ENCODE measurements at regions of chr5 and their contacts with region 1.

Region 1: GRCh38 chr5:157948738-157949410 is 89.9 kb upstream of the CLINT1 start:
- DNase-seq: peak; percentile 90
- ATAC-seq: peak; percentile 100
- H3K4me3 ChIP-seq: no peak overlapping the region
- H3K27ac ChIP-seq: no peak overlapping the region
- H3K4me1 ChIP-seq: no peaks in the 10 kb centered on the region
- H3K27me3 ChIP-seq: no peaks in the 10 kb centered on the region
- CTCF ChIP-seq: peak; percentile 93
- POLR2A ChIP-seq: no peak
- RAD21 ChIP-seq: peak; percentile 63

Region 2: DNA sequence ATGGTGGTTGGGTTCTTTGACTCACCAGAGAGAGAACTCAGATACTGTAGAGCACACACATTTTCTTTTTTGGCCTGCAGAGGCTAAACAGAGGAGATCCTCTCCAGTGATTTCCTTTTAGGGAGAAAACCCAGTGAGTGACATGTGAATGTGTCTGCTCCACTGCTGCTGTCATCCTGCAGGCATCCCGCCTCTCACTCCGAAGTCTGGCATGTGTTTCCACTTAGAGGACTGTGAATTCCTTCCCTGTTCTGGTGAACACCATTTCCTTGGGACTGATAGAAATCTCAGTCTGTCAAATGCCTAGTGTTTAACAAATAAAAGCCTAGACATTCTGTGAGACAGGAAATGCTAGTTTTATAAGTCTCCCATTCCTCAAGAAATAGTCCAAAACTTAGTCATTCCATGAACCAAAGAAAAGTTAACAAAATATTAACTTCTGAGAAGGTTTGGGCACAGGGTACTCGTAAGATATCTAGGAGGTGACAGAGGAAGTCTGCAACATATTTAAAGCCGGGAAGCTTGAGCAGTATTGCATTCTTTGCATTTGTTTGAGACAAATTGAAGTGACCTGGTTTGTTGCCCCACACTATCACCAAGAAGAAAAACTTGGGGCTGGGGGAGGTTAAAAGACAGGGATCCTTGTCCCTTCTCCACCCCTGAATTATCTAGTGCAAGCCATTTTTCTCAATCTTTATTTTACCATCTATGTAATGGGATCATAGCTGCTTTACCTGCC is 563.7 kb before region 1 on chr5:
- CTCF ChIA-PET with region 1: no interaction called
- POLR2A ChIA-PET with region 1: no interaction called
- dilution Hi-C with region 1: no loop called
- in situ Hi-C with region 1: no loop called
- intact Hi-C with region 1: no loop called
- DNase-seq: peak; percentile 99
- ATAC-seq: peak; percentile 86
- H3K4me3 ChIP-seq: no peak overlapping the region
- H3K27ac ChIP-seq: peak overlapping the region; percentile 64
- H3K4me1 ChIP-seq: peaks cover 23% of the 10 kb centered on the region
- H3K27me3 ChIP-seq: no peaks in the 10 kb centered on the region
- CTCF ChIP-seq: no peak
- POLR2A ChIP-seq: no peak
- RAD21 ChIP-seq: no peak

Region 3: GRCh38 chr5:158382473-158382872 is 433.6 kb after region 1 on chr5:
- CTCF ChIA-PET with region 1: no interaction called
- POLR2A ChIA-PET with region 1: no interaction called
- dilution Hi-C with region 1: no loop called
- in situ Hi-C with region 1: no loop called
- intact Hi-C with region 1: loop called (anchors 10 kb)
- DNase-seq: peak; percentile 97
- ATAC-seq: peak; percentile 91
- H3K4me3 ChIP-seq: no peak overlapping the region
- H3K27ac ChIP-seq: no peak overlapping the region
- H3K4me1 ChIP-seq: peaks cover 8% of the 10 kb centered on the region
- H3K27me3 ChIP-seq: no peaks in the 10 kb centered on the region
- CTCF ChIP-seq: no peak
- POLR2A ChIP-seq: no peak
- RAD21 ChIP-seq: peak; percentile 2; the same call in 1 of the 2 replicates

Region 4: DNA sequence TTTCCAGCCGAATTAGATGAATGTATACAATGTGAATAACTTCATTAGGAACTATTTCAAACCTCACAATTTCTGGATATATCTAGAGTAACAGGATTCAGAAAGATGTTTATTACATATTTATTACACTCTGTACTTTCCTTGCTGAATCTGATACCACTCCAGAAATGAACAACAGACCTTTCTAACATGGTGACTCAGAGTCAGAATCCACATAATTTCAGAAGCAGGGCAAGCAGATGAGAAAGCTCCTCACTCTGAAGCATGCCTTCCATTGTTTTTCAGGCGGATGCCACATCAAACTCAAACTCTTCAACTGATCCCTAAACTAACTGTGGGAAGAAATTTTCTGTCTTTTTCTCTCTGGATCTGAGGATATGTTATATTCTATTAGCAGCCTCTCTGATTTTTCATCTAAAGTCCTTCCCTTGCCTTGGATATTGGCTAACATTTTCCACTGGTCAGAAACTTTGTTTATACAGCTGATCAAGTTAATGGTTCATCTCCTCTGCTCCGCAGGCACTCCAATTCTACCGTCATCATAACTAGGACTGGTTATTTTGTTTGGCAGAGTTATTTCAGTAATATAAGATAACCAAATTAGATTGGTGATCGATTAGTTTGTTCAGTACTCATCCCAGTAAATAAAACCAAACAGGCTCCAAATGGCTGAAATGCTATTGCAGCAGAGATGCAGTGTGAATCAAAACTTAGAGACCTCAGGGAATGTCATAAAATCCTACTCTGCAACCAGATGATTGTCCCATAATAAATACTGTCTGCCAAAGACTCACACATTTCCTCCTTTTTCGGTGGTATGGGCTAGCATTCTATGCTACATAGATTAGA is 594.9 kb after region 1 on chr5:
- CTCF ChIA-PET with region 1: no interaction called
- POLR2A ChIA-PET with region 1: no interaction called
- dilution Hi-C with region 1: no loop called
- in situ Hi-C with region 1: no loop called
- intact Hi-C with region 1: no loop called
- DNase-seq: peak; percentile 8
- ATAC-seq: no peak
- H3K4me3 ChIP-seq: no peak overlapping the region
- H3K27ac ChIP-seq: no peak overlapping the region
- H3K4me1 ChIP-seq: no peaks in the 10 kb centered on the region
- H3K27me3 ChIP-seq: no peaks in the 10 kb centered on the region
- CTCF ChIP-seq: no peak
- POLR2A ChIP-seq: no peak
- RAD21 ChIP-seq: no peak

Measured in IMR-90 (cell line).